Colonic mucosa (tissue), 4 donors: ENCODE measurements at regions of chr10 and their contacts with region 1.

Region 1: GRCh38 chr10:94443047-94443446 is 40.7 kb downstream of the TBC1D12 start:
- DNase-seq: no peak
- H3K4me3 ChIP-seq: no peak overlapping the region
- H3K27ac ChIP-seq: no peak overlapping the region
- H3K4me1 ChIP-seq: no peaks in the 10 kb centered on the region
- H3K27me3 ChIP-seq: no peaks in the 10 kb centered on the region
- CTCF ChIP-seq: no peak

Region 2: DNA sequence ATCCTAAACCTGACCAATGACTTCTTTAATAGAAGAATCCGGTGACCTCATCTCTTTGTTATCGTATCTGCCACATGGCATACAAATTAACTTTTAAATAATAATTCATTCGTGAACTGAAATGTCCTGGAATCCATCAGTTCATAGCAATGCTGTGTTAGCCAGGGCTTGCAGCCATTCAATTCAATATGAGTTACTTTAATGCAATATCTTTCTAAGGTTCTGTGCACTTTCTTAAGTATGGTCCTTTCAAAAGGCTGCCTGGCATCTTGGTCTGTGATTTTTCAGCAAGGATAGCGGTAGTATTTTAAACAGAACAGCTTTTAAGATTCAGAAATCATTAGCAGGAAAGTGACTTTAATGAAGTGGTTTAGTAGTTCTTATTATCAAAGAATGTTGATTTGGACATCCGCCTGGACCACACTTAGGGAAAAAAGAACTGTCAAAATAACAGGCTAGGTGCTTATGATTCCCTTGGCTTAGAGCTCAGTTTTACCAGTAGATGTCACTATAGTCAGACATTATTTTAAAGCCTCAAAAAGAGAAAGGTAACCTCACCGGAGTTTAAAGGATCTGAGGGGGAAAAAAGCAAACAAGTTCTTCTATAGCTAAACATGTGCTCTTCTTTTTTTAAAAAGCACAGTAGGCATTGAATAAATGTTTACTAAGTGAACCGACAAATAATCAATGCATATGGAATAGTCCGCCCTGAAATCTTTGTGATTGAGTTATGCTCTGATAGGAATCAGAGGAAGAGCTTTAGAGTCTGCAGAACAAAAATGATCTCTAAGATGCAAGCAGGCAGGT is 526.6 kb before region 1 on chr10:
- intact Hi-C with region 1: loop called (anchors 10 kb)
- DNase-seq: no peak
- H3K4me3 ChIP-seq: peak overlapping the region; percentile 9
- H3K27ac ChIP-seq: no peak overlapping the region
- H3K4me1 ChIP-seq: no peaks in the 10 kb centered on the region
- H3K27me3 ChIP-seq: no peaks in the 10 kb centered on the region
- CTCF ChIP-seq: peak; percentile 38

Region 3: GRCh38 chr10:94279835-94280709 is 163.0 kb before region 1 on chr10:
- intact Hi-C with region 1: loop called (anchors 10 kb)
- DNase-seq: peak; percentile 27
- H3K4me3 ChIP-seq: no peak overlapping the region
- H3K27ac ChIP-seq: no peak overlapping the region
- H3K4me1 ChIP-seq: no peaks in the 10 kb centered on the region
- H3K27me3 ChIP-seq: no peaks in the 10 kb centered on the region
- CTCF ChIP-seq: peak; percentile 84

Region 4: GRCh38 chr10:94349327-94349726 is 93.7 kb before region 1 on chr10:
- intact Hi-C with region 1: no loop called
- DNase-seq: no peak
- H3K4me3 ChIP-seq: no peak overlapping the region
- H3K27ac ChIP-seq: no peak overlapping the region
- H3K4me1 ChIP-seq: no peaks in the 10 kb centered on the region
- H3K27me3 ChIP-seq: no peaks in the 10 kb centered on the region
- CTCF ChIP-seq: no peak